ENCODE measurements at regions of chr11 and their contacts with region 1.

Region 1: GRCh38 chr11:85854557-85855340 is 434 bp upstream of the CCDC83 start:
- DNase-seq: peak; percentile 81 to 97 (median 90)
- ATAC-seq: peak; percentile 99
- H3K4me3 ChIP-seq: peak overlapping the region; percentile 71
- H3K4me3 Mint-ChIP-seq: peak overlapping the region; percentile 79 to 95 (median 94)
- H3K27ac ChIP-seq: peak overlapping the region; percentile 84
- H3K27ac Mint-ChIP-seq: peak overlapping the region; percentile 85 to 98 (median 95)
- H3K4me1 ChIP-seq: peaks cover 6 to 9% of the 10 kb centered on the region in 2 donors
- H3K4me1 Mint-ChIP-seq: peaks cover 0 to 15% (median 13%) of the 10 kb centered on the region in 7 donors
- H3K27me3 ChIP-seq: no peaks in the 10 kb centered on the region
- H3K27me3 Mint-ChIP-seq: peaks cover 0 to 7% (median 0%) of the 10 kb centered on the region in 5 donors

Region 2: GRCh38 chr11:85595285-85595884 is 259.4 kb before region 1 on chr11:
- CTCF ChIA-PET with region 1: no interaction called
- POLR2A ChIA-PET with region 1: no interaction called
- intact Hi-C with region 1: loop called (anchors 1 kb)
- DNase-seq: peak in 7 of 9 donors; percentile 19 to 65 (median 49)
- ATAC-seq: peak; percentile 73
- H3K4me3 ChIP-seq: no peak overlapping the region
- H3K4me3 Mint-ChIP-seq: no peak overlapping the region
- H3K27ac ChIP-seq: no peak overlapping the region
- H3K27ac Mint-ChIP-seq: no peak overlapping the region
- H3K4me1 ChIP-seq: no peaks in the 10 kb centered on the region
- H3K4me1 Mint-ChIP-seq: no peaks in the 10 kb centered on the region
- H3K27me3 ChIP-seq: no peaks in the 10 kb centered on the region
- H3K27me3 Mint-ChIP-seq: peaks cover 0 to 19% (median 0%) of the 10 kb centered on the region in 5 donors

Region 3: DNA sequence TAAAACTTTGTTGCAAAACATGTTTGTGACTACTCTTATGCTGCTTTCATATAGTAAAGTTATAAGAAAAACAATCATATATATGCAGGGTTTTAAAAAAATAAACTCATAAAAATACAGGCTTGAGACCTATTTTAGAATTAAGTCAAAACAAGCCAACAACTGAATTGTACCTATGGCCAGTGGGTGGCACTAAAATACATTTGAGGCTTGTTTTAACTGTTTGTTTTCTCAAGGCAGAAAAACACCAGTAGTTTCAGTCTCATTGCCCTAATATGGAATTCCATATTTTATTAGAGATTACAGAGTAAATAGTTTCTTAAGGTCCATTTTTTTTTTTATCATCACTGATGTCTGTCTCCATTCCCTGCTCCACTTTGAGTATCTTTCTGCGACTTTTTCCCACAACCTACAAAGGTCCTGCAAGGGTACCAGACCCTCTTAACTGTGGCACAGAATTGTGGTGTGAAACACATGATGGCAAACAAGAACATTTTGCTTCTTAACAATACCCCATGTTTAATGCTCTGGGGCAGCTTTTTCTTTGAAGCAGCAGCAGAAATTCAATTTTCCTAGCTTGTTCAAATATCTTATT is 160.3 kb before region 1 on chr11:
- CTCF ChIA-PET with region 1: interaction called, 9 read pairs
- POLR2A ChIA-PET with region 1: interaction called, 4 read pairs
- intact Hi-C with region 1: loop called (anchors 1 kb)
- DNase-seq: peak in 7 of 9 donors; percentile 36 to 63 (median 55)
- ATAC-seq: peak; percentile 70
- H3K4me3 ChIP-seq: no peak overlapping the region
- H3K4me3 Mint-ChIP-seq: no peak overlapping the region
- H3K27ac ChIP-seq: no peak overlapping the region
- H3K27ac Mint-ChIP-seq: peak overlapping the region in 1 of 9 donors; percentile 12
- H3K4me1 ChIP-seq: peaks cover 2 to 7% of the 10 kb centered on the region in 2 donors
- H3K4me1 Mint-ChIP-seq: peaks cover 2 to 52% (median 8%) of the 10 kb centered on the region in 7 donors
- H3K27me3 ChIP-seq: no peaks in the 10 kb centered on the region
- H3K27me3 Mint-ChIP-seq: peaks cover 0 to 3% (median 0%) of the 10 kb centered on the region in 5 donors

Region 4: GRCh38 chr11:85902353-85902752 is 47.6 kb after region 1 on chr11:
- CTCF ChIA-PET with region 1: no interaction called
- POLR2A ChIA-PET with region 1: no interaction called
- intact Hi-C with region 1: no loop called
- DNase-seq: no peak
- ATAC-seq: no peak
- H3K4me3 ChIP-seq: no peak overlapping the region
- H3K4me3 Mint-ChIP-seq: no peak overlapping the region
- H3K27ac ChIP-seq: no peak overlapping the region
- H3K27ac Mint-ChIP-seq: no peak overlapping the region
- H3K4me1 ChIP-seq: no peaks in the 10 kb centered on the region
- H3K4me1 Mint-ChIP-seq: peaks cover 0 to 3% (median 0%) of the 10 kb centered on the region in 7 donors
- H3K27me3 ChIP-seq: no peaks in the 10 kb centered on the region
- H3K27me3 Mint-ChIP-seq: peaks cover 0 to 13% (median 4%) of the 10 kb centered on the region in 5 donors

Region 5: GRCh38 chr11:85941380-85941973 is 86.7 kb after region 1 on chr11:
- CTCF ChIA-PET with region 1: no interaction called
- POLR2A ChIA-PET with region 1: no interaction called
- intact Hi-C with region 1: loop called in 1 of 2 experiments (anchors 2 kb)
- DNase-seq: no peak
- ATAC-seq: peak; percentile 61
- H3K4me3 ChIP-seq: no peak overlapping the region
- H3K4me3 Mint-ChIP-seq: no peak overlapping the region
- H3K27ac ChIP-seq: no peak overlapping the region
- H3K27ac Mint-ChIP-seq: no peak overlapping the region
- H3K4me1 ChIP-seq: no peaks in the 10 kb centered on the region
- H3K4me1 Mint-ChIP-seq: peaks cover 0 to 10% (median 0%) of the 10 kb centered on the region in 7 donors
- H3K27me3 ChIP-seq: no peaks in the 10 kb centered on the region
- H3K27me3 Mint-ChIP-seq: no peaks in the 10 kb centered on the region

Region 6: DNA sequence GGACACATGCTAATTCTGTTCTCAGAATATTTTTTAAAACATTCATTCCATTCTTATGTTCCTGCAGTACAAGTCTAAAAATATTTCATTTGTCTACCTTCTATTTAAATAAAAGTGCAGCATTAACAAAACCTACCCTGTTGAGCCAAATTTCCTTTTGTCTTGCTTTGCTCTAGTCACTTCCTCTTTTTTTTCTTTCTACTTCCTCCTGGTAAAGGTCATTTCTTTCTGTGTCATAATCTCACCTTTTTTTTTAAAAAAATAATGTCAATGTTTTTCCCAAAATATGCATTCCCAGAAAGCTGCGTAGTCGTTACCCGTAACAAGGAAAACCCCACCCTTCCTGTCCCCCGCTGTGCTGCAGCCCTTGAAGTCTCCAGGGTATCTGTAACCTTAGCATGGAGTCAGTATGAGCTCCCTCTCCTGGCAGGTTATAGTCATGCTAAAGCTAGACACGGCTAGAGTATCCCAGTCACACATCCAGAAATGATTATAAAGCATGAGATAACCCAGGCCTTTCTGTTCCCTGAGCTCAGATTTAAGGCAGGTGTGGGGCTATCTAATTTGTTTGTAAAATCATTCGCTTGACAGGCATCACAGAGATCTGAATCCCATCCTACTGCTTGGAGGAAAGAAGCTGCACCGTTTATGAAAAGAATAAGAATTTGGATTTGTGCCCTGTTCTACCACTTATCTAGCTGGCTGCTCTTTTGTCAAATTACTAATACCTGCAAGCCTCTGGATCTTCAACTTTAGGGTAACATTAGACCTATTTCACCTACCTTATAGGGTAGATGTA is 338.7 kb after region 1 on chr11:
- CTCF ChIA-PET with region 1: interaction called, 16 read pairs
- POLR2A ChIA-PET with region 1: interaction called, 5 read pairs
- intact Hi-C with region 1: loop called in 1 of 2 experiments (anchors 1 kb)
- DNase-seq: peak; percentile 9 to 70 (median 65)
- ATAC-seq: peak; percentile 99
- H3K4me3 ChIP-seq: peak overlapping the region; percentile 36
- H3K4me3 Mint-ChIP-seq: peak overlapping the region; percentile 71 to 94 (median 88)
- H3K27ac ChIP-seq: no peak overlapping the region
- H3K27ac Mint-ChIP-seq: peak overlapping the region; percentile 21 to 91 (median 67)
- H3K4me1 ChIP-seq: peaks cover 5 to 7% of the 10 kb centered on the region in 2 donors
- H3K4me1 Mint-ChIP-seq: peaks cover 13 to 24% (median 15%) of the 10 kb centered on the region in 7 donors
- H3K27me3 ChIP-seq: no peaks in the 10 kb centered on the region
- H3K27me3 Mint-ChIP-seq: peaks cover 0 to 10% (median 3%) of the 10 kb centered on the region in 5 donors

Region 7: DNA sequence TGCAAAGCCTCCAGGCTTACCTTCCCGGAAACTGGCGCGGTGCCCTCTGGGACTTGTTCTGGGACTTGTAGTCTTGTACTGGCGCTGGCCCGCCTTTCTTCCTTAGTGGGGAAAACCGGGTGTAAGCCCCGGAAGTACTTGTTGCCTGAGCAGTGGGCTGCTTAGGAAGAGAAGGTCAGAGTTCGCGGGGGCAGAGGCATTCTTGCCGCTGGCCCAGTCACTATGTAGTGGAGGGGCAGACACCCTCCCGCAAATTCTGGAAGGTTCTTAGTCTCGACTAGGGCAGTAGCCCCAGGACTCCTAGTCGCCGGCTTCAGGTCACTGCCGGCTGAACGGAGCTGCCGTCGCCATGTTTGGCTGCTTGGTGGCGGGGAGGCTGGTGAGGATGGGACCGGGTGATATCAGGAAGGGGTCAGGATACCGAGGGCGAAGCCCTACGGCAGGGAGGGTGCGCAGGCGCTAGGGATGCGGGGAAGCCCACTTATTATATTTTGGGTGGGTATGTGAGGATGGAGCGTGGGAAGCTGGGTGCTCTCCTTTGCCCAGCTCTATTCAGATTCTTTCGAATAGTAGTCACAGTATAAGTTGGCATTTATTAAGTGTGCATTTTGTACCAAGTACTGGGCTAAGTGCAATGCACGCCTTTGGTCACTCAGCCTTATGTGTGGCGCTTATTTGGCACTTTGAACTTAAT is 447.5 kb after region 1 on chr11 and contains the start of gene HIKESHI:
- CTCF ChIA-PET with region 1: no interaction called
- POLR2A ChIA-PET with region 1: no interaction called
- intact Hi-C with region 1: loop called in 1 of 2 experiments (anchors 1 kb)
- DNase-seq: peak; percentile 70 to 92 (median 81)
- ATAC-seq: peak; percentile 100
- H3K4me3 ChIP-seq: peak within 1 kb of the TSS; percentile 96
- H3K4me3 Mint-ChIP-seq: peak within 1 kb of the TSS; percentile 95 to 100 (median 100)
- H3K27ac ChIP-seq: peak within 1 kb of the TSS; percentile 86
- H3K27ac Mint-ChIP-seq: peak within 1 kb of the TSS; percentile 92 to 100 (median 97)
- H3K4me1 ChIP-seq: peaks cover 10 to 13% of the 10 kb centered on the region in 2 donors
- H3K4me1 Mint-ChIP-seq: peaks cover 4 to 37% (median 32%) of the 10 kb centered on the region in 7 donors
- H3K27me3 ChIP-seq: no peaks in the 10 kb centered on the region
- H3K27me3 Mint-ChIP-seq: peaks cover 0 to 8% (median 0%) of the 10 kb centered on the region in 5 donors
- total RNA-seq, gene HIKESHI: 16.7 to 38.4 (median 29.5) TPM

Region 8: GRCh38 chr11:86869966-86870570 is 1015.3 kb after region 1 on chr11:
- CTCF ChIA-PET with region 1: no interaction called
- POLR2A ChIA-PET with region 1: no interaction called
- intact Hi-C with region 1: loop called in 1 of 2 experiments (anchors 5 kb)
- DNase-seq: peak in 6 of 9 donors; percentile 3 to 44 (median 13)
- ATAC-seq: peak; percentile 76
- H3K4me3 ChIP-seq: no peak overlapping the region
- H3K4me3 Mint-ChIP-seq: no peak overlapping the region
- H3K27ac ChIP-seq: no peak overlapping the region
- H3K27ac Mint-ChIP-seq: no peak overlapping the region
- H3K4me1 ChIP-seq: no peaks in the 10 kb centered on the region
- H3K4me1 Mint-ChIP-seq: peaks cover 0 to 2% (median 0%) of the 10 kb centered on the region in 7 donors
- H3K27me3 ChIP-seq: no peaks in the 10 kb centered on the region
- H3K27me3 Mint-ChIP-seq: peaks cover 0 to 9% (median 0%) of the 10 kb centered on the region in 5 donors